A673 (cell line): ENCODE measurements at regions of chr9 and their contacts with region 1.

Region 1: GRCh38 chr9:88747768-88748167 is 212.8 kb downstream of the NXNL2 start:
- DNase-seq: peak; percentile 92
- H3K4me3 ChIP-seq: no peak overlapping the region
- H3K27ac ChIP-seq: peak overlapping the region; percentile 78
- H3K4me1 ChIP-seq: peaks cover 56% of the 10 kb centered on the region
- H3K27me3 ChIP-seq: no peaks in the 10 kb centered on the region
- CTCF ChIP-seq: no peak

Region 2: GRCh38 chr9:88593537-88594185 is 154.1 kb before region 1 on chr9:
- CTCF ChIA-PET with region 1: no interaction called
- POLR2A ChIA-PET with region 1: no interaction called
- intact Hi-C with region 1: loop called (anchors 10 kb)
- DNase-seq: peak; percentile 85
- H3K4me3 ChIP-seq: no peak overlapping the region
- H3K27ac ChIP-seq: no peak overlapping the region
- H3K4me1 ChIP-seq: peaks cover 6% of the 10 kb centered on the region
- H3K27me3 ChIP-seq: no peaks in the 10 kb centered on the region
- CTCF ChIP-seq: peak; percentile 74